Endothelial cell of umbilical vein (primary cell): ENCODE measurements at regions of chr6 and their contacts with region 1.

Region 1: GRCh38 chr6:27608916-27609883 is 136.3 kb upstream of the ZNF184 start:
- DNase-seq: peak; percentile 63
- H3K4me3 ChIP-seq: no peak overlapping the region
- H3K27ac ChIP-seq: no peak overlapping the region
- H3K4me1 ChIP-seq: no peaks in the 10 kb centered on the region
- H3K27me3 ChIP-seq: no peaks in the 10 kb centered on the region
- CTCF ChIP-seq: peak; percentile 74 to 79
- POLR2A ChIP-seq: no peak

Region 2: DNA sequence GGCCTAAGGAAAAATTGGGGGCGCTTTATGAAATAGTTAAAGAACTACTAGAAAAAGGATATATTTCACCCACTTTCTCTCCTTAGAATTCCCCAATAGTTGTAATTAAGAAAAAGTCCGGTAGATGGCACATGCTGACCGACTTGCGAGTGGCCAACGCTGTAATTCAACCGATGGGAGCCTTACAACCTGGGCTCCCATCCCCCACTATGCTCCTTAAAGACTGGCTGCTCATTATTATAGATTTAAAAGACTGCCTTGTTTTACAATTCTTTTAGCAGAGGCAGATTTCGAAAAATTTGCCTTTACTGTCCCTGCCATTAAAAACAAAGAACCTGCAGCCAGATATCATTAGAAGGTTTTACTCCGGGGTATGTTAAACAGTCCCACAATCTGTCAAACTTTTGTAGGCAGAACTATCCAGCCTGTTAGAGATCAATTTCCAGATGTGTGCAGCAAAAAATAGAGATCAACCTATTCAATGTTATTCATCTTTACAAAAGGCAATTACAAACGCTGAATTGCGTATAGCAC is 420.2 kb before region 1 on chr6:
- CTCF ChIA-PET with region 1: interaction called, 3 read pairs
- POLR2A ChIA-PET with region 1: no interaction called
- dilution Hi-C with region 1: no loop called
- intact Hi-C with region 1: loop called (anchors 1 kb)
- DNase-seq: peak; percentile 83
- H3K4me3 ChIP-seq: peak overlapping the region; percentile 59 to 80 (median 66)
- H3K27ac ChIP-seq: peak overlapping the region; percentile 37
- H3K4me1 ChIP-seq: no peaks in the 10 kb centered on the region
- H3K27me3 ChIP-seq: peaks cover 0 to 4% of the 10 kb centered on the region in 2 experiments
- CTCF ChIP-seq: peak; percentile 54 to 55
- POLR2A ChIP-seq: no peak

Region 3: DNA sequence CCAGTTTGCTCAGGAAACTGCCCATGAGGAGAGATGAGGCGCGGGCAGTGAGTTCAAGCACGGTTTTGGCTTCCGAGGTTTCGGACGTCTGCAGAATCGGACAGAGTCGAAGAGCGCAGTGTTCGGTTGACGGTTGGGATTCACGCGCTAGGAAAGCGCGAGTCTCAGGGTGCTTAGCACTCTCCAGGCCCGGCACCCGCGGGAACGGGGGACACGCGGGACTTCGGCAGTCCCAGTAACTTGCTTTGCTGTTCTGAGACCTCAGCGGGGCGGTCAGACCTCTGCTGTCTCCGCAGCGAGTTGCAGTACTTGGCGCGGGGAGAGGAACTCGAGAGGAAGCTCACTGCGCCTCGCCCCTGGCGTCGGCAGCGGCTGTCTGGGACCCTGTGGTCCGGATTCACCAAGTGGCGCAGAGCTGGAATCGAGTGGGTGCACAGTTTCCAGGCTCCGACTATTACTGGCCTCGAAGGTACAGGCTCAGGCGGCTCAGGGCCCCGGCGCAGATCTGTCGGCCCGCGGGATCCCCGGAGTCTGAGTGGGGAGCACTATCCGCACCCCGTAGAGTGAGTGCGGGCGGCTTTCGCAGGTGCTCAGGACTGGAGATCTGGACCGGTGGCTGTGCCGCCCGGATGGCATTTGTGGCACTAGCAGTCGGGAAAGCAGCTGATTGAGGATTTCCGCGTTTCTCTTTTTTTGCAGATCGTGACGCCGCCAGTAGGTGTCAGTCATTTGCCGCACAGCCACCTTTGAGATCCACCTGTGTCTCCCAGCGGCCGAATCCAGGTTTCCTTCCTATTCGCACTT is 296.9 kb before region 1 on chr6 and contains the start of gene POM121L2:
- CTCF ChIA-PET with region 1: interaction called, 13 read pairs
- POLR2A ChIA-PET with region 1: no interaction called
- dilution Hi-C with region 1: no loop called
- intact Hi-C with region 1: loop called (anchors 1 kb)
- DNase-seq: peak; percentile 65
- H3K4me3 ChIP-seq: peak within 1 kb of the TSS; percentile 41 to 60 (median 51)
- H3K27ac ChIP-seq: no peak within 1 kb of the TSS
- H3K4me1 ChIP-seq: peaks cover 9% of the 10 kb centered on the region
- H3K27me3 ChIP-seq: peaks cover 14 to 20% of the 10 kb centered on the region in 2 experiments
- CTCF ChIP-seq: peak; percentile 50 to 69
- POLR2A ChIP-seq: no peak
- total RNA-seq, gene POM121L2: not detected in 2 replicates

Region 4: DNA sequence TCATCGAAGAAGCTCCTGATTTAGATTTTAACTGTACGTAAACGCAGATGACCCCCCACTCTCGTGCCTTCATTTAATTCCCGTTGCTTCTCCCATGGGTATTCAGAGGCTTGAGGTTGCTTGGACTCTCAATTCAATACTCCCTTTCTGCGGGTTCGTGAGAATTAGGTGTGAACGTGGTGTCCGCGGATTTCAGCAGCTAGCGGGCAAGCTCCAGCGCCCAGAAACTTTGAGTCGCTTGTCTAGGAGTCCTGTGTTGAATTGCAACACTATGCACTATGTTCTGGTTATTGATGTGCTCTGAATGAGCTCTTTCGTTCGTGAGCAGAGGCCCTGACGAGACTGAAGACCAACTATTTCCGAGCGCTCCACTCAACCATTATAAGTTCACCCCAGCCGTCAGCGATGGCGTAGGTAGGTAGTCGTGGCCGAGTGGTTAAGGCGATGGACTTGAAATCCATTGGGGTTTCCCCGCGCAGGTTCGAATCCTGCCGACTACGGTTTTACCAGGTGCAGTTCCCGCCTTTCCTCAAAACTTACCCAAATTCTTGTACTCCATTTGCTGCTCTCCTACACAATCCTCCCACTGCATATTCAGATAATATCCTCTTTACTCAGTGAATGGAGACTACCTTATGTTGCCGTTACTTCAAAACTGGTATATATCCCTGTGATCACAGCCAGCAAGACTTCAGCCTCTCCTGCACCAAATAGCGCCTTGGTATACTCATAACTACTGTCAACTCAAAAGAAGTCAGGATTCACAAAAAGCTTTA is 63.7 kb before region 1 on chr6:
- CTCF ChIA-PET with region 1: interaction called, 8 read pairs
- POLR2A ChIA-PET with region 1: no interaction called
- dilution Hi-C with region 1: no loop called
- intact Hi-C with region 1: loop called (anchors 5 kb)
- DNase-seq: peak; percentile 43
- H3K4me3 ChIP-seq: peak overlapping the region; percentile 0 to 74 (median 73)
- H3K27ac ChIP-seq: no peak overlapping the region
- H3K4me1 ChIP-seq: peaks cover 13% of the 10 kb centered on the region
- H3K27me3 ChIP-seq: peaks cover 0 to 6% of the 10 kb centered on the region in 2 experiments
- CTCF ChIP-seq: no peak
- POLR2A ChIP-seq: no peak

Region 5: DNA sequence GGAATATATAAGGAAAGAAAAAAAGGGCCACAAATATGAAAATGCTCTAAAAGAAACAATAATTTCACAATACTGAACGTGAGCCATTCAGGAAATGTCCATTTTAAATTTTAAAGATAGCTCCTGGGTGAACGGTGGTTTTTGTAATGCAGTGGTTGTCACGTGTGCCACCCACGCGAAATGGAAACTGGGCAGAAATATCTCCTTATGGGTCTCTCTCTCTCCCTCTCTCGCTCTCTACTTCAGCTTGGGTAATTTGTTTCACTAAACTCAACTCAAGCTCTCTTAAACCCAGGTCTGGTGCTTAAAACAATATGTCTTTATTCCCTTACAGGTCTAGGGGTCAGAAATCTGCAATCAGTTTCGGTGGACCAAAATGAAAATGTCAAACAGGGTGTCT is 152.2 kb after region 1 on chr6:
- CTCF ChIA-PET with region 1: no interaction called
- POLR2A ChIA-PET with region 1: no interaction called
- dilution Hi-C with region 1: no loop called
- intact Hi-C with region 1: no loop called
- DNase-seq: no peak
- H3K4me3 ChIP-seq: no peak overlapping the region
- H3K27ac ChIP-seq: no peak overlapping the region
- H3K4me1 ChIP-seq: no peaks in the 10 kb centered on the region
- H3K27me3 ChIP-seq: peaks cover 30% of the 10 kb centered on the region in 2 experiments
- CTCF ChIP-seq: no peak
- POLR2A ChIP-seq: no peak